Heart right ventricle (tissue), 16 donors: ENCODE measurements at regions of chr13 and their contacts with region 1.

Region 1: GRCh38 chr13:101711307-101712025 is 259.0 kb downstream of the ITGBL1 start:
- DNase-seq: no peak
- ATAC-seq: peak in 5 of 8 donors; percentile 29 to 66 (median 37)
- H3K4me3 ChIP-seq: no peak overlapping the region
- H3K27ac ChIP-seq: no peak overlapping the region
- H3K4me1 ChIP-seq: peaks cover 0 to 7% (median 0%) of the 10 kb centered on the region in 9 donors
- H3K27me3 ChIP-seq: peaks cover 0 to 6% (median 0%) of the 10 kb centered on the region in 7 donors
- CTCF ChIP-seq: no peak

Region 2: DNA sequence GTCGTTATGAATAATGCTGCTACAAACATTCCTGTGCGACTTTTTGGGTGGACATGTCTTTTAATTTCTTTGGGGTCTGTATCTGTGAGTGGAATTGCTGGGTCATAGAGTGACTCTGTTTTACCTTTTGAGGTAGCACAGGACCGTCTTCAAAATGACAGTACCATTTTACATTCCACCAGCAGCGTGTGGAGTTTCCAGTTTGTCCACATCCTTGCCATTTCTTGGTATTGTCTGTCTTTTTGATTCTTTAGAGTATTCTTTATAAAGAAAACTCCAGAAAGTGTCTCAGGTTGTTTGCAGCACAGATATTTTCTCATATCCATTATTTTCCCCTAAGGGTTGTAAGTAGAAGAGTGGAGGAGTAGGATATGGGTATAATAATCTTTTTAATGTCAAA is 108.5 kb before region 1 on chr13:
- intact Hi-C with region 1: no loop called
- DNase-seq: no peak
- ATAC-seq: no peak
- H3K4me3 ChIP-seq: no peak overlapping the region
- H3K27ac ChIP-seq: no peak overlapping the region
- H3K4me1 ChIP-seq: no peaks in the 10 kb centered on the region
- H3K27me3 ChIP-seq: no peaks in the 10 kb centered on the region
- CTCF ChIP-seq: no peak

Region 3: DNA sequence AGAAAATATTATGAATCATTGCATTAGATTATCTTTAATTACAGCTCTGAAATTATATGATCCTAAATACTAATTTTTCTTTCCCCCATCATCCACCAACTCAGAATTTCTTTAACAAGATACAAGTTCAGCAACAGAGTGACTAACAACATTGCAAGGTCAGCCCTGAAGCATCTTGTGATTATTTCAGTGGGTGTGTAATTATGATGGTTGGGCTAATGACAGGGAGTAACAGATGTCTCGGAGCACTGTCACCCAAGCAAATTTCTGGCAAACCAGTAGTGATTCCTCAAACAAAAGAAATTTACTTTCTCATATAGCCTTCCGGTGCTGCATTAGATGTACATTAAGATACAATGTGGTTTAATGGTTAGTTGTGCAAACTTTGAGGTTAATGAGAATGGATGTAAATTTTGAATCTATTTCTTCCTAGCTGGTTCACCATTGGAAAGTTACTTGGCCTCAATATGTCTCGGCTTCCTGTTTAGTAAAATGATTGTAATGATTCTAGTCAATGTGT is 20.1 kb before region 1 on chr13:
- intact Hi-C with region 1: loop called in 1 of 10 experiments (anchors 1 kb)
- DNase-seq: no peak
- ATAC-seq: no peak
- H3K4me3 ChIP-seq: no peak overlapping the region
- H3K27ac ChIP-seq: no peak overlapping the region
- H3K4me1 ChIP-seq: no peaks in the 10 kb centered on the region
- H3K27me3 ChIP-seq: no peaks in the 10 kb centered on the region
- CTCF ChIP-seq: no peak